ENCODE measurements at regions of chr2 and their contacts with region 1.

Region 1: DNA sequence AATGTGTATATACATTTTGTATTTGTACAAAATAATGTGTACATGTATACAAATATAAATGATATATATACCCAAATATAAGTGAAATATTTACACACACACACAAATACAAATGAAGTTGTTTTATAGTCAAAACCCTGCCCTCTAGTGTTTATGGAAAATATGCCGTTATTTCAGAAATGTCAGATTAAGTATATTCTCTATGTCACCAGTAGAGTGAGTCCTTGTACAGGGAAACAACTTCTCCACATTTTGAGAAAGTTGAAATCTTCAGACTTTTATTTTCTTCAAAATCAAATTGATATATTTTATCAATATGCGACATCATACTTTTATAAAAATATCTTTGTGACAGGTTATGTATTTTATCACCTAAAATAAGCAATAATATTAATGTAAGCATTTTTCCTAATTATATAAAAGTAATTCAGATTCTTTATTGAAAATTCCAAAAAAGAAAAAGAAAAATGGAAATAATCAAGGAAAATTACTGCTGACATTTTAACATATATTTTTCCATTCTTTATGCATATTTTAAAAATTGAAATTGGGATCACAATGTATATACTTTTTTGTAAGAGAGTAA is 22.4 kb downstream of the ARL6IP6 start:
- DNase-seq: peak; percentile 63
- H3K4me3 Mint-ChIP-seq: no peak overlapping the region
- H3K27ac Mint-ChIP-seq: no peak overlapping the region
- H3K4me1 Mint-ChIP-seq: no peaks in the 10 kb centered on the region
- H3K27me3 Mint-ChIP-seq: no peaks in the 10 kb centered on the region
- CTCF ChIP-seq: peak; percentile 81

Region 2: GRCh38 chr2:152483276-152484063 is 257.4 kb before region 1 on chr2:
- CTCF ChIA-PET with region 1: no interaction called
- POLR2A ChIA-PET with region 1: no interaction called
- intact Hi-C with region 1: no loop called
- DNase-seq: no peak
- H3K4me3 Mint-ChIP-seq: no peak overlapping the region
- H3K27ac Mint-ChIP-seq: no peak overlapping the region
- H3K4me1 Mint-ChIP-seq: peaks cover 6% of the 10 kb centered on the region
- H3K27me3 Mint-ChIP-seq: no peaks in the 10 kb centered on the region
- CTCF ChIP-seq: no peak

Region 3: DNA sequence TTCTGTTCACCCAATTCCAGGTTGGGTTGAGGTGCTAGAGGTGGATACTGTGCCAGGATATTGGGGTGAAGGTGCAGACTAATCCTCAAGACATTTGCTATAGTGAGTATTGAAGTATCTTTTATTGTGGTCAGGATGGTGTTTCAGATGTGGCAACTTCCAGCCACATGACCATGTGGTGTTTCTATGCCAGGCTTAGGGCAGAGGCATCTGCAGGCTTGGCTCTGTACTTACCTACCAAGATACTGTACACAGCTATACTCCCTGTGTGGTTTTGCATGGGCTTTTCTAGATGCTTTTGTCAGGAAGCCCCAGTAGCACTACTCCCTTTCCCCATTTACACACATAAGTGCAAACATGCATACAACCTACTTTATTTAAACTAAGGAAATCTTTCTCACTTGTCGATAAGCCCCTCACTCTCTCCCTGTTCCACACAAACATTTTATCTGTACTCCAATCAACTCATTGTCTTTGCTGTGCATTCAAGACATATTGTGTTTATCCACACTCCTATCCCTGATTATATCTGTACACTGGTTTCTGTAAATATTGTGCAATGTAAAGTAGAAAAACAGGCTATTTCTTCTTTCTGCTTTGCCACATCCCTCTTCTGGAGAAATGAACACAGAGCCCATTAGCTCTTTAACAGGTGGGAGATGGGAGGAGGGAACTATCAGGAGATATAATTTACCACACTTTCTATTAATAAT is 10.1 kb before region 1 on chr2:
- CTCF ChIA-PET with region 1: interaction called, 18 read pairs
- POLR2A ChIA-PET with region 1: interaction called, 5 read pairs
- intact Hi-C with region 1: no loop called
- DNase-seq: peak; percentile 21
- H3K4me3 Mint-ChIP-seq: no peak overlapping the region
- H3K27ac Mint-ChIP-seq: no peak overlapping the region
- H3K4me1 Mint-ChIP-seq: peaks cover 10% of the 10 kb centered on the region
- H3K27me3 Mint-ChIP-seq: no peaks in the 10 kb centered on the region
- CTCF ChIP-seq: no peak

Region 4: DNA sequence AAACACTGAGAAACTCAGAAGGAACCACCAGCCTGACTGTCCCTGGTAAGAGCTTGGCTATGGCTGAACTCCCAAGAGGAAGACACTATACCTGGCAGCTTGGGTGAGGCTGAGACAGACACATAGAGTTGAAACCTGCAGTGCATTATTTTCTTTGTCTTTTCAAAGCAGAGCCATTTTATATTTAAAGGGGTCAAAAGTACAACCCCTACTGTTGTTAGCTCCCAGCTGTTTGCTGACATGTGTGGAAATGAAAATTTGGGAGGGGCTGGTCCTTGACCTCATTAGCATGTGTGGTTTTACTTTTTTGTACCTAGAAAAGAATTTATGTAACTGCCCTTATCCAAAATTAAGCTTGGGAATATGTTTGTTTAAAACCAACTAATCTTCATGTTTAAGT is 428.8 kb after region 1 on chr2:
- CTCF ChIA-PET with region 1: no interaction called
- POLR2A ChIA-PET with region 1: no interaction called
- intact Hi-C with region 1: loop called (anchors 5 kb)
- DNase-seq: no peak
- H3K4me3 Mint-ChIP-seq: no peak overlapping the region
- H3K27ac Mint-ChIP-seq: no peak overlapping the region
- H3K4me1 Mint-ChIP-seq: peaks cover 10% of the 10 kb centered on the region
- H3K27me3 Mint-ChIP-seq: peaks cover 4% of the 10 kb centered on the region
- CTCF ChIP-seq: no peak

Region 5: DNA sequence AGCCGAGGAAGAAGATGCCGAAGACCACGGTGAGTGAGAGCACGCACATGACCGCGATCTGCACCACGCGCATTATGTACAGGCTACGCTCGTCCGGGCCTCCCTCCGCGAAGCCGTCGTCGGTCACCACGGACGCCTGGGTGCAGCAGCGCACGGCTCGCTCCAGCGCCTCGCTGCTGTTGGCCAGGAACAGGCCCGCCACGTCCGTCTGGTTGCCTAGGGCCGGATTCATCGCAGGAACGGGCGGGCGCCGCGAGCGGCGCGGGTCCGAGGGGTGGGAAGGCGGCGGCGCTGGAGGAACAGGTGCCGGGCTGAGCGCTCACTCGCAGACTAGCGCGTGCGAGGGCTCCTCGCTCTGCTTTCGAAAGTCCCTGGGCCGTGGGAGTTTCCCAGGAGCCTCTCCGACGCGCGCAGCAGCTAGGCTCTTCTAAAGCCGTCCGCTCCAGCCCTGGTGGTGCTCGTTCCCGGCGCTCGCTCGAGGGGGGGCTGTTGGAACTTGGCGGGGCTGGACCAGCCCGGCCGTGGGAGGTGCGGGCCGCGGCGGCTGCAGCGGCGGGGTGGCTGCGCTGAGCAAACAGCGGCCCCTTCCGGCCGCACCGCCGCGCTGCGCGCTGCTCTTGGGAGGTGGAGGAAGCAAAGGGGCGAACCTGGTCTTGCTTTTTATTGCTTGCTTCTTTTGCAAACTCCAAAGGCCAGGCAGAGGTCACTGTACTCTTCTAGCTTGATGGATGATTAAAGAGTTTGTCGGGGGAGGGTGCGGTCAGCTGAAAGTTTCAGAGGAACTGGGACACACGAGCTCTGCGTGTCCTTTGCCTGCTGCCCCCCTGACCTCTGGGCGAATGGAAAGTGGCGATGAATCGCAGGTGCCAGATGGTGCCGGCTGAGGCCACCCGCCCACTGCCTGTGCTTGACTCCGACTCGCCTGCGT is 737.8 kb after region 1 on chr2 and contains the start of gene RPRM:
- CTCF ChIA-PET with region 1: interaction called, 16 read pairs
- POLR2A ChIA-PET with region 1: no interaction called
- intact Hi-C with region 1: loop called (anchors 1 kb)
- DNase-seq: peak; percentile 52
- H3K4me3 Mint-ChIP-seq: peak within 1 kb of the TSS; percentile 55
- H3K27ac Mint-ChIP-seq: no peak within 1 kb of the TSS
- H3K4me1 Mint-ChIP-seq: peaks cover 7% of the 10 kb centered on the region
- H3K27me3 Mint-ChIP-seq: peaks cover 48% of the 10 kb centered on the region
- CTCF ChIP-seq: peak; percentile 97
- total RNA-seq, gene RPRM: not detected in 2 replicates

Region 6: GRCh38 chr2:153519257-153519875 is 778.5 kb after region 1 on chr2:
- CTCF ChIA-PET with region 1: interaction called, 36 read pairs
- POLR2A ChIA-PET with region 1: no interaction called
- intact Hi-C with region 1: loop called (anchors 1 kb)
- DNase-seq: peak; percentile 70
- H3K4me3 Mint-ChIP-seq: no peak overlapping the region
- H3K27ac Mint-ChIP-seq: no peak overlapping the region
- H3K4me1 Mint-ChIP-seq: no peaks in the 10 kb centered on the region
- H3K27me3 Mint-ChIP-seq: peaks cover 33% of the 10 kb centered on the region
- CTCF ChIP-seq: peak; percentile 73

Measured in MCF 10A (cell line).